Kidney (tissue), 22 donors: ENCODE measurements at regions of chr22 and their contacts with region 1.

Region 1: DNA sequence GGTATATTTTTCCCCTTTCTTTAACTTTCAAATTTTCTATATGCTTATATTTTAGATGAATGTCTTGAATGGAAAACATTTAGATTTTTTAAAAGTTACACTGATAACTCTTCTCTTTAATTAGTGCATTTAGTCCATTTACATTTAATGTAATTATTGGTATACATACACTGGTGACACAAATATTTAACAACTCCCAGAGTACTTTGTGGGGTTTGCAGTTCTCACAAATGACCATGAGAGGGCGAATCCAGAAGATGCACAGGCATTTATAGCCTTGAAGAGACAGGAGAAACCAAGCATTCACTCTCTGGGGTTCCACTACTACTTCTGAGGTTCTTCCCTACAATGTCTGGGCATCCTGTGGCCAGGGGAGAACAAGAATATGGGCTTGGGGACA is 125.1 kb downstream of the TIMP3 start:
- DNase-seq: no peak
- H3K4me3 ChIP-seq: no peak overlapping the region
- H3K27ac ChIP-seq: no peak overlapping the region
- H3K4me1 ChIP-seq: no peaks in the 10 kb centered on the region
- H3K27me3 ChIP-seq: no peaks in the 10 kb centered on the region
- CTCF ChIP-seq: peak; percentile 59

Region 2: DNA sequence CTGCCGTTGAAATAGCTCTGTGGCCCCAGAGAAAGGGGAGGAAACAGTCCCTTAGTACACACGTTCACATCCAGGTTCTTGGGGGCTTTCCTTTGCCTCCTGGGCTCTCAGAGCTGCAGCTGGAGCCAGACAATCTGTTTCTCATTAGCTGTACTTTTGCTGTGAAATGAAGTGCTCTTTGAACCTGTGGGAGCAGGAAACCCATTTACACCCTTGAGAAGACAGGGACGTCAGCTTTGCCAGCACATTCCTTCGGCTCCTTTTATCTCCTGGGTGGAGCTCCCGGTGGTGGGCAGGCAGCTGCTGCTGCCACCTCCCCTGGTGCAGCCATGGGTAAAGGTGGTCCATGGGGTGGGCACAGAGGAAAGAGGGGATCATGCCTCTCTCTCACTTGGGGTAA is 205.7 kb before region 1 on chr22:
- intact Hi-C with region 1: no loop called
- DNase-seq: peak in 3 of 5 donors; percentile 44 to 85 (median 64)
- H3K4me3 ChIP-seq: no peak overlapping the region
- H3K27ac ChIP-seq: no peak overlapping the region
- H3K4me1 ChIP-seq: peaks cover 0 to 4% (median 0%) of the 10 kb centered on the region in 3 donors
- H3K27me3 ChIP-seq: no peaks in the 10 kb centered on the region
- CTCF ChIP-seq: no peak

Region 3: GRCh38 chr22:32985899-32986765 is 59.5 kb after region 1 on chr22:
- intact Hi-C with region 1: loop called (anchors 10 kb)
- DNase-seq: peak in 4 of 5 donors; percentile 91 to 96 (median 94)
- H3K4me3 ChIP-seq: no peak overlapping the region
- H3K27ac ChIP-seq: no peak overlapping the region
- H3K4me1 ChIP-seq: peaks cover 0 to 8% (median 0%) of the 10 kb centered on the region in 3 donors
- H3K27me3 ChIP-seq: no peaks in the 10 kb centered on the region
- CTCF ChIP-seq: peak; percentile 94